Mammary epithelial cell (primary cell): ENCODE measurements at regions of chr20 and their contacts with region 1.

Region 1: DNA sequence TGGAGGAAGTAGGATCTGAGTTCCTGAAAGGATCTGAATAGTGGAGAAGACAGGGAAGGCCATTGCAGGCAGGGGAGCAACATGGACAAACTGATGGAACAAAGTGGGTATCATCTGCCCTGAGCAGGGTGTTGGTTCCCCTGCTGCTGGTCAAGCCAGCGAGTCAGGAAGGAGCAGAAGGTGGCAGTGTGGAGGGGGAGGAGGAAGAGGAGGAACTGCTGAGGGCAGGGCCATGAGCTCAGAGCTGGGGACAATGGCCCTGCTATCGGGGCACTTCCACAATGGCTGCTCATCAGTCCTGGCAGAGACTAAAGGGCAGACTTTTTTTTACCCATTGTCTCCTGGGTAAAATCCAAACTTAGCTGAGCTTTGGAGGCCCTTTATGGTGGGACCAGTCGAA is 13.6 kb downstream of the CNBD2 start:
- DNase-seq: no peak
- H3K4me3 ChIP-seq: no peak overlapping the region
- H3K27ac ChIP-seq: no peak overlapping the region
- H3K4me1 ChIP-seq: no peaks in the 10 kb centered on the region
- H3K27me3 ChIP-seq: no peaks in the 10 kb centered on the region
- CTCF ChIP-seq: no peak

Region 2: DNA sequence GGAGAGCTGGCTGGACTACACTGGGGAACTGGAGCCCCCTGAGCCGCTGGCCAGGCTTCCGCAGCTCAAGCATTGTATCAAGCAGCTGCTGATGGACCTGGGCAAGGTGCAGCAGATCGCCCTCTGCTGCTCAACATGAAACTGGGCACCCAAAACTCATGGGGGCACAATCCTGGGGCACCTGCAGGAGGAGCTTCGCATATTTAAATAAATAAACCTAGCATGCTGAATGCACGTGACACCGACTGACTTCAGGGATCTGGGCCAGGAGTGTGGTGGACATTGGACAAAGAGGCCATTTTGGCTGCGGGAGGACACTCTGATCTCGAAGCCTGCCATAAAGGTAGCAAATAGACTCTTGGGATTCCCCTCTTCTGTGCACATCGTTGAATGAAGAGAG is 34.5 kb before region 1 on chr20:
- CTCF ChIA-PET with region 1: no interaction called
- dilution Hi-C with region 1: loop called (anchors 5 kb)
- in situ Hi-C with region 1: no loop called
- intact Hi-C with region 1: no loop called
- DNase-seq: peak; percentile 22
- H3K4me3 ChIP-seq: no peak overlapping the region
- H3K27ac ChIP-seq: no peak overlapping the region
- H3K4me1 ChIP-seq: peaks cover 2% of the 10 kb centered on the region
- H3K27me3 ChIP-seq: no peaks in the 10 kb centered on the region
- CTCF ChIP-seq: peak; percentile 54 to 57

Region 3: GRCh38 chr20:36028106-36028826 is 46.3 kb after region 1 on chr20:
- CTCF ChIA-PET with region 1: no interaction called
- dilution Hi-C with region 1: loop called (anchors 5 kb)
- in situ Hi-C with region 1: no loop called
- intact Hi-C with region 1: no loop called
- DNase-seq: no peak
- H3K4me3 ChIP-seq: no peak overlapping the region
- H3K27ac ChIP-seq: no peak overlapping the region
- H3K4me1 ChIP-seq: no peaks in the 10 kb centered on the region
- H3K27me3 ChIP-seq: no peaks in the 10 kb centered on the region
- CTCF ChIP-seq: no peak

Region 4: DNA sequence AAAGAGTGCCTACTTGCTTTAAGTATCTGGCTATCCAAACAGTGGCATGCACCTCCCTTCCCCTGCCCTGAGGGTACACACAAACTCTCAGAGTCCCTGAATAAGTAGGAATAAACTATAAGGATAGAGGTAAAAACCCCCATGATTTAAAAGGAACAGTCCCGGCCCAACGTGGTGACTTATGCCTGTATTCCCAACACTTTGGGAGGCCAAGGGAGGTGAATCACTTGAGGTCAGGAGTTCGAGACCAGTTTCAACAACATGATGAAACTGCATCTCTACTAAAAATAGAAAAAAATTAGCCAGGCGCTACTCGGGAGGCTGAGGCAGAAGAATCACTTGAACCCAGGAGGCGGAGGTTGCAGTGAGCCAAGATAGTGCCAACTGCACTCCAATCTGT is 947.3 kb after region 1 on chr20:
- CTCF ChIA-PET with region 1: interaction called, 13 read pairs
- dilution Hi-C with region 1: no loop called
- in situ Hi-C with region 1: no loop called
- intact Hi-C with region 1: no loop called
- DNase-seq: peak; percentile 32
- H3K4me3 ChIP-seq: no peak overlapping the region
- H3K27ac ChIP-seq: no peak overlapping the region
- H3K4me1 ChIP-seq: no peaks in the 10 kb centered on the region
- H3K27me3 ChIP-seq: no peaks in the 10 kb centered on the region
- CTCF ChIP-seq: no peak